ENCODE measurements at regions of chr1 and their contacts with region 1.

Region 1: DNA sequence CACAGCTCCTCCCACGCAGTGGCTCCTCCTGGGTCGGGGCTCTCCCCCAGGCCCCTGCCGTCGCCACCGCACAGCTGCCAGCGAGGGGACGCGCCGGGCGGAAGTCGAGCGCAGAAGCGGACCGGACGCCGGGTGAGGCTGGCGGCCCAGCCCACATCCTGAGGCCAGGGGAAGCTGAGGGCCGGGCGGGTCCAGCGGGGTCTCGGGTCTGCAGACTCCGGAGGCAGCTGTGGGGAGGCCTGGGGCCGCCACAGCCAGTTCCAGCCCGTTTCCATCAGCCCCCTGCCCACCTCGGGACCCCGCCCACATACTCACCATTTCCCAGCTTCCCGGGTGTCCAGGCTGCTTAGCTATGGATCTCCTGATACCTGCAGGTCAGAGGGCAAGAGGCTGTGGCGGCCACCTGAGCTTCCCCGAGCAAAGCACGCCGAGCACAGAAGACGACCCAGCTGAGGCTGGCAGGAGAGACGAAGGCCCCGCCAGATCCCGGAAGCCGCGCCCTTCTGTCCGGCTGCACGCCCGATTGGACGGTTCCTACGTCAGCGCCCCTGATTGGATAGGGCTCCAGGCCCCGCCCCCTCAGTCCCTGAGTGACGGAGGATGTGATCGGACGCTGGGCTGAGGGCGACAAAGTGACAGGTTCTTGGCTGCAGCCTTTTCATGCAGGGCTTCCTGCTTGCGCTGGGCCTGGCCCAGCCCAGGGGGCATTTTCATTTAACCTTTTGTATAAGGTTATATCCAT is 38.7 kb upstream of the ZNF124 start:
- DNase-seq: peak; percentile 99
- ATAC-seq: peak; percentile 100
- H3K4me3 ChIP-seq: peak overlapping the region; percentile 6 to 63
- H3K27ac ChIP-seq: peak overlapping the region in 1 of 2 donors; percentile 65
- H3K4me1 ChIP-seq: peaks cover 0 to 4% of the 10 kb centered on the region in 2 donors
- H3K27me3 ChIP-seq: no peaks in the 10 kb centered on the region

Region 2: DNA sequence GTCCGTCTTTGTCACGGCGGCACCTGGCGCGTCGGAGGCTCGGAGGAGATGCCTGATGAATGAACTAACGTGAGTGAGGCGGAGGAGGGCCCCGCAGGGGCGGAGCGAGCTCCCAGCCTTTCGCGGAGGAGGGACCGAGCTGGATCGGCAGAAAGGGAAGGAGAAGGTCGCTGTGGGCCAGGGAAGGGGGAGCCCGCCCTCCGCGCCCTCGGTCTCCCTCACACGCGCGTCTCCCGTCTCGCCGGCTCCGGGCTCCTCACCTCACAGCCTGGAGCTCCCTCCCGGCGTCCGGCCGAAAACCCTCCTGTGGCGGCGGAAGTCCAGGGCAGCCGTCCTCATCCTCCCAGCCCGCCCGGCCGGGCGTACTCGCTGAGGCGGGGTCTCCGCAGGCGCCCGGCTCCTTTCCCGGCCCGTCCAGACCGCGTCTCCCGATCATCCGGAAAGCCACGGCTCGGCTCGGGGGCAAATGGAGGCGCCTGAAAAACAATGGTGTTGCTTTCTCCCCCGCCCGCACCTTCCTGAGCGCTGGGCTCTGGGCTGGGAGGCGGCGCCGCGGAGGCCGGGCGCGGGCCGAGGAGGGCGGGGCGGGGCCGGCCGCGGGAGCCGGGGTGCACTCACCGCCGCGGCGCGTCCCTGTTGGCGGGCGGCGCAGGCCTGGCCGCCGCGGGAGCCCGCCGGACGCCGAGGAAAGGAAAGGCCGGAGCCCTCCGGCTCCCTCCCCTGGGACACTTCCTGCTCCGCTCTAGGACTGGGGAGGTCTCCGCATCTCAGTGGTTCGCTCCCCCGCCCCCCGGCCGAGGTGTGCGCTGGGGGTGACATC is 120.8 kb after region 1 on chr1 and contains the start of gene ZNF496:
- intact Hi-C with region 1: loop called in 1 of 2 experiments (anchors 5 kb)
- DNase-seq: peak; percentile 88 to 92
- ATAC-seq: peak; percentile 83
- H3K4me3 ChIP-seq: peak within 1 kb of the TSS; percentile 91 to 93
- H3K27ac ChIP-seq: peak within 1 kb of the TSS; percentile 54 to 87
- H3K4me1 ChIP-seq: no peaks in the 10 kb centered on the region
- H3K27me3 ChIP-seq: no peaks in the 10 kb centered on the region
- total RNA-seq, gene ZNF496: 23.1 to 29.0 TPM